Dorsolateral prefrontal cortex (tissue), 120 donors: ENCODE measurements at regions of chr17 and their contacts with region 1.

Region 1: GRCh38 chr17:18363101-18364049 is at the start of gene SHMT1:
- DNase-seq: peak; percentile 91 to 98 (median 94)
- H3K4me3 ChIP-seq: peak within 1 kb of the TSS; percentile 69 to 100 (median 92)
- H3K27ac ChIP-seq: peak within 1 kb of the TSS; percentile 43 to 97 (median 91)
- H3K27me3 ChIP-seq: no peaks in the 10 kb centered on the region
- CTCF ChIP-seq: peak in 26 of 56 donors; percentile 2 to 52 (median 18)
- total RNA-seq, gene SHMT1: 8.0 to 77.4 (median 18.4) TPM

Region 2: GRCh38 chr17:17823433-17824118 is 539.8 kb before region 1 on chr17:
- intact Hi-C with region 1: loop called in 1 of 2 experiments (anchors 10 kb)
- DNase-seq: peak; percentile 77 to 92 (median 86)
- H3K4me3 ChIP-seq: peak overlapping the region; percentile 52 to 90 (median 73)
- H3K27ac ChIP-seq: peak overlapping the region; percentile 63 to 99 (median 94)
- H3K27me3 ChIP-seq: no peaks in the 10 kb centered on the region
- CTCF ChIP-seq: no peak

Region 3: GRCh38 chr17:18248300-18248731 is 115.1 kb before region 1 on chr17:
- intact Hi-C with region 1: loop called (anchors 5 to 10 kb)
- DNase-seq: peak in 9 of 10 donors; percentile 45 to 79 (median 73)
- H3K4me3 ChIP-seq: no peak overlapping the region
- H3K27ac ChIP-seq: peak overlapping the region in 57 of 59 donors; percentile 13 to 91 (median 76)
- H3K27me3 ChIP-seq: no peaks in the 10 kb centered on the region
- CTCF ChIP-seq: peak; percentile 42 to 87 (median 71)

Region 4: GRCh38 chr17:18291718-18292540 is 71.4 kb before region 1 on chr17:
- intact Hi-C with region 1: no loop called
- DNase-seq: no peak
- H3K4me3 ChIP-seq: no peak overlapping the region
- H3K27ac ChIP-seq: no peak overlapping the region
- H3K27me3 ChIP-seq: no peaks in the 10 kb centered on the region
- CTCF ChIP-seq: no peak

Region 5: DNA sequence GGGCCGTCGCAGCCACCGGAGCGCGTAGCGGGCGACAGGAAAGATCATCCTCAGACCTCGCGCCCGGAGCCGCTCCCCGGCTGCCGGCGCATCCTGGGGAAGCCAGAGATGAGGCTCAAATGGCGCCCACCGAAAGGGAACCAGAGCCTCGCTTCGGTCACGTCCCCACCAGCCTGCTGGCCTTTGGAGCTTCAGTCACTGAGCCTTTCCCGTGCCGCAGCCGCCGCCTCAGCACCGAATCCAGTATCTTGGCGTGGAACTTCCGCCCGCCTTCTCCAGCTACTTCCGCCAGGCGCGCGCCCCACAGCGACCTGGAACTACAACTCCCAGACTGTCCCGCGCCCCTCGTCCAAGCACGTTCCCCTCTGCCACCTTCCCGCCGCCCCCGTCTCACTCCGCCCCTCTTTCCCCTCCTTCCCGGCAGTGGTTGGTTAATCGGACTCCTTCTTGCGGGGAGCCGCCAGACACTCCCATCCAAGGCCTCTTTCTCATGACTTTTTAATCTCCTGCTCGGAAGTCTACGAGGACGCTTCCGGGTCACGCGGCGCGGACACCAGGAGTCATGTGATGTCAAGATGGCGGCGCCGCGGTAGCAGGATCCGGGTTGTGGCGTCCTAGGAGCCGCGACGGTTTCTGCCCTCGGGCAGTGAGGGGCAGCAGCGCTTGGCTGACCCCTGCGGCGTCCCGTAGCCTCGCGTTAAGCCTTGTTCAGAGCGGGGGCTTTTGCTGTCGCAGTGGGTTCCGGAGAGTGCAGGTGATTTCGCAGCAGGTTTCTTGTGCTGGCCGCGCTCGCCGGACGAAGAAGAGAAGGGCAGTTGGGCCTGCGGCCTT is 48.4 kb before region 1 on chr17 and contains the starts of genes SMCR8 and TOP3A:
- intact Hi-C with region 1: loop called in 1 of 2 experiments (anchors 2 kb)
- DNase-seq: peak; percentile 94 to 98 (median 97)
- H3K4me3 ChIP-seq: peak within 1 kb of the TSS; percentile 59 to 100 (median 94)
- H3K27ac ChIP-seq: peak within 1 kb of the TSS; percentile 27 to 98 (median 91)
- H3K27me3 ChIP-seq: no peaks in the 10 kb centered on the region
- CTCF ChIP-seq: peak in 35 of 56 donors; percentile 3 to 59 (median 26)
- total RNA-seq, gene SMCR8: 13.6 to 22.3 (median 18.4) TPM
- total RNA-seq, gene TOP3A: 30.1 to 65.0 (median 46.2) TPM